ENCODE measurements at regions of chr12 and their contacts with region 1.

Region 1: GRCh38 chr12:63843721-63844390 is 644 bp upstream of the SRGAP1 start:
- DNase-seq: peak; percentile 88 to 95 (median 91)
- ATAC-seq: peak; percentile 93
- H3K4me3 ChIP-seq: peak overlapping the region; percentile 80
- H3K4me1 ChIP-seq: peaks cover 13% of the 10 kb centered on the region
- CTCF ChIP-seq: peak; percentile 99

Region 2: DNA sequence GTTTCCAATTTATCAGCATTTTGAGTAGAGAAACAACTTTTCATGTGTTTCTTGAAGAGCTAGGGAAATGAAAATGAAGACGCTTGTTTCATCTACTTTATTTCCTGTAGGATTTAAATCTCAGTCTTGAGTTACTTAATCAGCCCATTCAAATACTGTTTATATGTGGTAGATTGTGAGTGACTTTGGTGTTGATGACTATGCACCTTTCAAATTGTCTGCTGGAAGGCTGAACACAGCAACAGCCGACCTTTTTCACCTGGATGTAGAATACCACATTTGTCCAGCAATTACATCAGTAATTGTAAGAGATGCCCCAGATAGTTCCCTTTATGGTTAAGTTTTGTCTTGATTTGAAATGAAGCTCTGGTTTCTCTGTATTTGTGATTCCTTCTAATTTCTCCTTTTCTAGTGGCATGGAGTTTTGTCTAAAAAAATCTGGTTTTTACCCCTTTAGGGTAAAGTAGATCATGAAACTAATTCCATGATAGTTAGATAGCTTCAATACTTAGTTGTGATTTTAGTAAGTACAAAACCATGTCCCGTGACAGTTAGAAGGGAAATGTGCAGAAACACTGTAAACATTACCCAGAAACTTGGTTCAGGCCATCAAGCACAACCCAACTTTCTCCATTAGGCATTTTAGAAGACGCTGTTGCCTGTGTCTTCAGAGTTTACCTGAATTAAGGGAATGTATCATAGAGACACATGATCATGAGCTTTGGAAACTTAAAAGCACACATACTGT is 165.6 kb after region 1 on chr12:
- intact Hi-C with region 1: loop called in 1 of 2 experiments (anchors 10 kb)
- DNase-seq: no peak
- ATAC-seq: no peak
- H3K4me3 ChIP-seq: no peak overlapping the region
- H3K4me1 ChIP-seq: no peaks in the 10 kb centered on the region
- CTCF ChIP-seq: no peak

Region 3: DNA sequence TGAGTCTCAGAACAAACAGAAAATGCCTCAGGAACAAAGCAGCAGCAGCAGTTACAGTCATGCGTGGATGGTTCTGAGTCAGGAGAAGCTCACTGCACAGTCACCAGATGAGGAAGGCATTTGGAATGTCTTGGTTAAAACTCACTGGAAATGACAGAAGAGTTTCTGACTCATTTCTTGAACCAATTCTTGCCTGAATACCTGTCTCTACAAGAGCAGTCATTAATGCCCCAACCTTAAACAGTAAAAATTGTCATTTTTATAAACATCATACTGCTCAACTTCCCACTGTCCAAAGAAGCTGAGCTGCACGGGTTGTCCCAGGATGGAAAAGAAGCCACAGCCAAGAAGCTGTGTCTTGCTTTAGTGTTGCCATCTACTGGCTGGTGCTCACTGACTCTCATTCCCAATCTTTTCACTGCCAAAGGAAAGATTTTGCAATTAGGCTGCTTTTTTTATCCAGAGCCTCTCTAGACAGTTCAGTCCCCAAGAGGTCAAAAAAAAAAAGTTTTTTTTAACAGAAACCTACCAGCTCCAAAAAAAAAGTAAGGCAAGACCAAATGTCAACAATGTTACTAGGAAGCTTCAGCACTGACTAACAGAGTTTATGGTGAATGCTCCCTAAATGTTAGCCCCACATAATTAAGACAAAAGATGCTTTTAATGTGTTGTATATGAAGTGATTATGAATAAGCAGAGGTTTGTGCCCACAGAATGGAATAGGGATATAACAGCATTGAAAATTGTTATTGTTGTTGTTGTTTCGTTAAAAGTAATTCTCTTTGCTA is 337.8 kb after region 1 on chr12:
- intact Hi-C with region 1: loop called in 1 of 2 experiments (anchors 5 kb)
- DNase-seq: peak in 1 of 3 donors; percentile 69
- ATAC-seq: peak; percentile 85
- H3K4me3 ChIP-seq: no peak overlapping the region
- H3K4me1 ChIP-seq: no peaks in the 10 kb centered on the region
- CTCF ChIP-seq: peak; percentile 22